ENCODE measurements at regions of chr7 and their contacts with region 1.

Region 1: GRCh38 chr7:130010689-130011412 is 40.3 kb downstream of the ZC3HC1 start:
- DNase-seq: peak; percentile 88
- H3K4me3 Mint-ChIP-seq: no peak overlapping the region
- H3K27ac Mint-ChIP-seq: no peak overlapping the region
- H3K4me1 Mint-ChIP-seq: peaks cover 4% of the 10 kb centered on the region
- H3K27me3 Mint-ChIP-seq: no peaks in the 10 kb centered on the region

Region 2: GRCh38 chr7:129825496-129826267 is 185.2 kb before region 1 on chr7:
- CTCF ChIA-PET with region 1: interaction called, 10 read pairs
- POLR2A ChIA-PET with region 1: no interaction called
- DNase-seq: peak; percentile 87
- H3K4me3 Mint-ChIP-seq: peak overlapping the region; percentile 86
- H3K27ac Mint-ChIP-seq: peak overlapping the region; percentile 84
- H3K4me1 Mint-ChIP-seq: peaks cover 25% of the 10 kb centered on the region
- H3K27me3 Mint-ChIP-seq: no peaks in the 10 kb centered on the region

Region 3: DNA sequence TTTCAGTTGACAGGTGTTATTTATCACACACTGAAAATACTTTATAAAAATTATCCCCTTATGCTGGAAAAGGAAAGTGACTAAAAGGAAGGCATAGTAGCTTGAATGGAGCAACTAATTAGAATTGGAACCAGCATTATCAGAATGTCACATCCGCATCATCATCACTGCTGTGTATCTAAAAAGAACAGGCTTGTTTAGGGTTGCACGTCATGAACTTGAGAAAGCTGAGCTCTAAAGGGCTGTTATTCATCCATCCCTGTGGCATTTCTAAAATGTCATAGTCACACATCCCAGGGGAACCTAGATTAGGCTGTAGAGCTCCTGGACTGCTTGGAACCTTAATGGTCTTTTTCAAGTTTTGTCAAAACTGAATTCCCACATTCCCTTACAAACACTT is 113.9 kb after region 1 on chr7:
- CTCF ChIA-PET with region 1: no interaction called
- POLR2A ChIA-PET with region 1: no interaction called
- DNase-seq: no peak
- H3K4me3 Mint-ChIP-seq: no peak overlapping the region
- H3K27ac Mint-ChIP-seq: no peak overlapping the region
- H3K4me1 Mint-ChIP-seq: peaks cover 8% of the 10 kb centered on the region
- H3K27me3 Mint-ChIP-seq: no peaks in the 10 kb centered on the region

Measured in activated CD4-positive, alpha-beta T cell treated with anti-CD3 and anti-CD28 coated beads, Interleukin-2, amount 10 ng/mL, durations not matched to agents 7 days and 5 days (primary cell).